Right ventricle myocardium inferior (tissue), 1 donor: ENCODE measurements at regions of chr6 and their contacts with region 1.

Region 1: GRCh38 chr6:28136585-28137504 is 4.8 kb upstream of the ZKSCAN8 start:
- DNase-seq: peak; percentile 92
- ATAC-seq: peak; percentile 92

Region 2: DNA sequence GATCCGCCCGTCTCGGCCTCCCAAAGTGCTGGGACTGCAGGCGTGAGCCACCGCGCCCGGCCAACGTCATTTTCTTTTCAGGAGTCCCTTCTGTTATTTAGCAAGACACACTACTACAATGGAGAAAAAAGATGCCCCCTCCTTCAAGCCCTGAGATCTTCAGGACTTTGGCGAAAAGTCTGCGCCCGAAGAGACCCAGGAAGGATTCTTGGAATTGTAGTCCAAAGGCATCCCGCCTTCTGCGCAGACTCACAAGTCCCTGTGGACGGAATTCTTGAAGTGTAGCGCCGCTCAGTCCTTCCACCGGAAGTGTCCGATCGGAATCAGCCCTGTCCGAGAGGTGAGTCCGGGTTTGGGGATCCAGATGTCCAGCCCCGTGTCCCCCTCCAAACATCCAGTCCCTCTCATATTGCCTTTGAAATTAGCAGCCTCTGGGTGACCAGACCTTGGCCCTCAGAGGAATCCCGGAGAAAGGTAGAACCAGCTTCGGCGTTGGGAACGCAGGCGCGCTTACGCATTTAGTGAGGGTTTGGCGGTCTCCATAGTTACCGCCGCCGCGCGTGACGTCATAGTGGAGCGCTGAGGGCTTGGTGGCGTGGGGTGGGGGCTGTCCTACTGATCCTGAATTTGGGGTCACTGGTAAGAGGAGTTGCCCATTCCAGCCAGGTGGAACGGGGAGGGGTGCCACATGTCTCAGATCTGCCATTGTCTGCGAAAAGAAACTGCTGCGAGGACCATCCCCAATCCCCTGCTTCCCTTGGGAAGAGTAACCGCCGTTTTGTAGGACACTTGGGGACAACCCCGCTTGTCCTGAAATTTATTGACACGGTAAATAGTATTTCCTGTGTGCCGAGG is 56.0 kb before region 1 on chr6:
- intact Hi-C with region 1: loop called (anchors 2 kb)
- DNase-seq: peak; percentile 95
- ATAC-seq: peak; percentile 99

Region 3: DNA sequence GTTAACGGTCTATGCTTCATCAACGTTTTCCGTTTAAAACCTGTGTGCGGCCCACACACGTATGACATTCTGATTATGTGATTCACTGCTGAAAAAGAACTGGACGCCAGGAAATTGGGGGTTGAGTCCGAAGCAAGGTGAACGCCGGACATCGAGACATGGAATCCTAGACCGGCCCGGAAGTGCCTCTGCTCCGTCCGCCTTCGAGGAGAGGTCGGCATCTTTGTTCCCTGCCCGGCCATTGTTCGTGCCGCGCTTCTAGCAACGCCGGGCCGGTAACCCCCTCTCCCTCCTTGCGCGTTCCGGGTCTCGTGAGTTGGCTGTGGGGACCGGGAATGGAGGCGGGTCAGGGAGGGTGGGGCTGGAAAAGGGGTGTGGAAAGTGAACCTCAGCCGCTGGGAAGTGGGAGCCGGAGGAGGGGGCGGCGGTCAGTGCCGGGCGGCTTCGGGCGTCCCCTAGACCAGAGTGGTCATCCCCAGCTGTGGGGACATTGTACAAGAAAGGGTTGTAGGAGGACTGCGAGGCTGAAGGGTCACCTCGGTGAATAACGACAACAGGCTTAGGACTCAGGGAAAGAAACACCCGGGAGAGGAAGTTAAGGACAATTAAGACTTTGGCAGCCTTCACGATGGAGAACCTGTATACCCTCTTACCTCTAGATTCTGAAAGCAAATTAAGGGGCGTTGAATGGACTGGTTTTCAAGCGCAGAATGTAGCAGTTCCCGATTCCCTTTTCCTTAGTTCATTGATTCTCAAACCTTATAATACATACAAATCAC is 88.4 kb after region 1 on chr6 and contains the start of gene ZSCAN9:
- intact Hi-C with region 1: loop called (anchors 5 kb)
- DNase-seq: peak; percentile 91
- ATAC-seq: peak; percentile 97
- total RNA-seq, gene ZSCAN9: 9.4 TPM

Region 4: GRCh38 chr6:28258877-28259767 is 122.3 kb after region 1 on chr6 and contains the start of gene NKAPL:
- intact Hi-C with region 1: loop called (anchors 5 kb)
- DNase-seq: peak; percentile 92
- ATAC-seq: peak; percentile 97
- total RNA-seq, gene NKAPL: 7.4 TPM

Region 5: GRCh38 chr6:28349892-28350737 is 213.3 kb after region 1 on chr6 and contains the start of gene ZKSCAN3:
- intact Hi-C with region 1: loop called (anchors 2 kb)
- DNase-seq: peak; percentile 92
- ATAC-seq: peak; percentile 96
- total RNA-seq, gene ZKSCAN3: 4.0 TPM

Region 6: DNA sequence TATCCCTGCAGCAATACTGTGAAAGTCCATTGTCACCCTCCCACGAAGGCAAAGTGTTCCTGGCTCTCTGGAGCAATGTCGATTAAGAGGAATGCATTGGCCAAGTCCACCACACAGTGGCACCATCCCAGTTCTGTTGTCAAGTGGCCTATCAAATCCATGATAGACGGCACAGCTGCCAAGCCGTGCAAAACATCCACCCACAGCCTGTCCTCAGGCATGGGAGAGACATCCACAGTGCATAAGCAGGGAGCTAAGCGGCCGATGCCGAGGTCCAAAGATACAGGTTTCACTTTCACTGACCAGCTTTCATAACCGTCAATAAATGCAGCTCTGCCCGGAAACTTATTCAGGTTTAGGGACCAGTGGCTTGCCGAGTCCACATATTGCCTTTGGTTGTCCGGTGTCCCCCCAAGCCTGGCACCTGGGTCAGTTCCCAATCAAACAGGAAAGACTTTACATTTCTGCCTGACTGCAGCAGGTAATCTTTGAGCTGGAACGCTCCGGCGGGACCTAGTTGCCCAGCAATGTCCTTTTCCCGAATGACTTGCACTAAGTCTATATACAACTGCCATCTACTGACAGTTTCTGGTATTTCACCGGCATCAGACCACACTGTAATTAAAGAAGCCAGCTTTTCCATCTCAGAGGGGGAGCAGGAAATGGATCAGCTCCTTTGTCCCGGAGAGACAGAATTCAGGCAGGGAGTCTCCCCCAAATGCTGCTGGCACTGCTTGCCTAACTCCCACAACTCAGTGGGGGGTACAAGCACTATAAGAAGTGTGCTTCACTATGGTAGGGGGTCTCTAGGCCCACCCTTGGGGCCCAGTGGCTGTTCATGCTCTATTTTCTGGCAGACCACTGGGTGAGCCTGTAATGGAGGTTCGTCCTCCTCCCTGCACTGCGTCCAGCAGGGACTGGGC is 219.2 kb after region 1 on chr6:
- intact Hi-C with region 1: loop called (anchors 2 kb)
- DNase-seq: peak; percentile 84
- ATAC-seq: peak; percentile 88